AG04449 (cell line): ENCODE measurements at regions of chr10 and their contacts with region 1.

Region 1: DNA sequence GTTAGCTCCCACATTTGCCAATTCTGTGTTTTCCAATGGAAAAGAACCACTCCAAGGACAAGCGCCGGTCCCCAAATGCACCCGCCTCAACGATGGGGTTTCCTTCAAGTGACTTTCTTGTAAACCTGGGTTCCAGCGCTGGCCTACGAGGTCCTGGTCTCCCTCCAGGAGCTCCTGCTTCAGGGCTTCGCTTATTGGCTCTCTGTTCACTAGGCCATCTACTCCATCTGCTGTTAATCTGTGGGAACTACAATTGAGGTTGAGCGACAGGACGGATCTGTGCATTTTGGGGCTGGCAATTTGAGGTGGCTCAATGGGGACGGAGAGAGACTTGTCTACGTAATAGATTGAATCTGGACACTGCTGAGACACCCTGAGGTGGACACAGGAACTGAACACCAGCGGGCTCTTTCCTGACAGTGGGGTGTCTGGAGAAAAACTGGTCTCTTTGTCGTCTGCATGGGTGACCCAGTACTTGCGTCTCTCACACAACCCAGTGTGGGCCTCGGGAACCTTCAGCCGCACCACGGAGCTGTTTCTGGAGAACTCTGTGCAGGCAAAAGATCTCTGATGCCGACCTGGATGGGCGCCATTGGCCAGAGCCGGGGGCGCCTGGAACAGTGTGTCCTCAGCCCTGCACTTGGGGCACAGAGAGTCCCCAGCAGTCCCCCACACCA is 115.9 kb upstream of the ADAM12 start:
- DNase-seq: no peak
- H3K4me3 ChIP-seq: no peak overlapping the region
- CTCF ChIP-seq: peak; percentile 73

Region 2: DNA sequence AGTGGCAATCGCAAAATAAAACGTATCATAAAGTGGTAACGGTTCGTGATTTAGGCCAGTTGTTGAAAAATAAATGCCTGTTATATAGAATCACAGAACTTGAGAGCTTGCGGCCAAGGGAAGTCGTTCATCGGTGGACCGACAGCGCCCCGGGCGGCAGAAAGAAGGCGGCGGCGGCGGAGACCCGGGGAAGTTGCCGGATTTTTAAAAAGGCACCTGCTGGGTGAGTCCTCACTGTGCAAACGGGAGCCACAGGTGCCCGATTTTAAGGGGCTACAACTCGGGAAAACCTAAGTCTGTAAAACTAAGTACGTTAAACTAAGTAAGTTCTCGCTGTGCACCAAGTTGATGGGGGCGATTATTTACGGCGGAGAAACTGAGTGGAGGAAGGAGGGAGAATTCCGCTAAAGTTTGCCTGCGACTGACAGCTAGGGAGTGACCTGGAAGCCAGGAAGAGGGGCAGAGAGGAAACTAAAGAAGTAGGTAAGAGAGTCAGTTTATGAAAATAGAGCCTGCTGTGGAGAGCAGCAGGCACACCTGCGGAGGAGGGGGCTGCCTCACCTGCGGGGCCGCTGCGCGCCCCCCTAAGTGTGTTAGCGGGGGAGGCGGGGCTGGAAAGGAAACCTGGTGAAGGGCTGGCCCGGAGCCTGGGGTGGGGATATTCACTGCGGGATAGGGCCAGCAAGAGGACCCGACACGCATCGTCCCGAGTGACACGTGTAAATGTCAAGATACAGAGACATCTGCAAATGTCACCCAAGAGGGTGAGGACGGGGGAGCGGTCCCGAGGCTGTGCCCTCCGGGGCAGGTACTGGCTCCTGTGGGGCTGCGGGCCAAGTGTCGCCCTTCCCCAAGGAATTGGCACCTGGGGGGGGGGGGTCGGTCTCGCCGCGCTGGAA is 116.9 kb before region 1 on chr10:
- CTCF ChIA-PET with region 1: interaction called, 35 read pairs
- POLR2A ChIA-PET with region 1: interaction called, 4 read pairs
- DNase-seq: no peak
- H3K4me3 ChIP-seq: peak overlapping the region; percentile 81
- CTCF ChIP-seq: peak; percentile 87

Region 3: GRCh38 chr10:126394948-126395347 is 109.3 kb before region 1 on chr10:
- CTCF ChIA-PET with region 1: interaction called, 35 read pairs
- POLR2A ChIA-PET with region 1: no interaction called
- DNase-seq: no peak
- H3K4me3 ChIP-seq: no peak overlapping the region
- CTCF ChIP-seq: no peak

Region 4: GRCh38 chr10:126459878-126460481 is 44.2 kb before region 1 on chr10:
- CTCF ChIA-PET with region 1: interaction called, 11 read pairs
- POLR2A ChIA-PET with region 1: no interaction called
- DNase-seq: peak; percentile 70
- H3K4me3 ChIP-seq: no peak overlapping the region
- CTCF ChIP-seq: no peak